Dorsolateral prefrontal cortex (tissue), 120 donors: ENCODE measurements at regions of chr5 and their contacts with region 1.

Region 1: DNA sequence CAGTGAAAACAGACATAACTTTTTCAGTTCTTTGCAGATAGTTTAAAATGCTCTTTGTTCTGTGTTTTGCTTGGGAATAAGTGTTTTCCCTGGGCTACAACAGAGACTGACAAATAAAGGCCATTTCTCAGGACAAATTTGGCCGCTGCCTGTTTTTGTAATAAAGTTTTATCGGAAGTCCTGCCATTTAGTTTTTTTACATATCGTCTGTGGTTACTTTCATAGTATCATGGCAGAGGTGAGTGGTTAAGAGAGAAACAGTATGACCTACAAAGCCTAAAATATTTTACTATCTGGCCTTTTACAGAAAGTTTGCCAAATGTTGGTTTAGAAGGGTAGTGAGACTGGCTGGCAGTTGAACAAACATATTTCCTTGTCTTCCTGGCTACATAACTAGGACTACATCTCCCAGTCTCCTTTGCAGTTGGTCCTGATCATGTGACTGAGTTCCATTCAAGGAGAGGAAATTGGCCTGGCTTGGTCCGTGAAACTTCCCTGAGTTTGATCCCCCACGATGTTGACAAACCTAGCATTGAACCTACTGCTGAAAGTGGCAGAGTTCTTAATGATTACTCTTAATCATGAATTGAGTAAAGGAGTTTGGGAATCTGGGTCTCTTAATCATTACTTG is 281.0 kb downstream of the SLIT3 start:
- DNase-seq: no peak
- H3K4me3 ChIP-seq: no peak overlapping the region
- H3K27ac ChIP-seq: no peak overlapping the region
- H3K27me3 ChIP-seq: peaks cover 0 to 3% (median 0%) of the 10 kb centered on the region in 45 donors
- CTCF ChIP-seq: no peak

Region 2: DNA sequence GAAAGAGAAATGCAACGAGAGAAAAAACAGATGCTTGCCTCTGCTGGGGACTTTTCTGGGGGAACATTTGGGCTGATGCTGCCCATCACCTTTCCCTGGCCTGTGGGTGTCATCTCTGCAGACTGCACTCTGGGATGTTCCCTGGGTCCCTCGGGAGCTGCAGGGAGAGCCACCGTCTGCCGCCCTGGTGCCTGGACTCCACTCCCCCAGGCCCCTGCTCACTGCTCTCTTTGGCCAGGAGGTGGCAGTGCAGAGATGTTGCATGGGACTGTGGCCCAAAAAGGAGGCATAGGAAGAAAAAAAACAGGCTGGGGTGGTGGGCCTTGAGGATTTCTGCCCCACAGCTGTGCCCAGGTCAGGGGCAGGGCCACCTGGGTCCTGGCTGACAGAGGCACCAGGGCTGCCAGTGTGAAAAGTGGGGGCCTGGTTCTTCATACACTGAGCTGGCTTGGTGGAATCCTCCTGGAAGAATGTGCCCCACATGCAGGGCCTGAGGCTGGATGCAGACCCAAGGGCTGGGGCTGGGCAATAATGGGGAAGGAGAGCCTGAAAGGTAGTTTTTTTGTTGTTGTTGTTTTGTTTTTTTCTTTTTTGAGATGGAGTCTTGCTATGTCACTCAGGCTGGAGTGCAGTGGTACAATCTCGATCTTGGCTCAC is 72.6 kb before region 1 on chr5:
- intact Hi-C with region 1: no loop called
- DNase-seq: peak in 2 of 10 donors; percentile 27 to 54
- H3K4me3 ChIP-seq: no peak overlapping the region
- H3K27ac ChIP-seq: no peak overlapping the region
- H3K27me3 ChIP-seq: no peaks in the 10 kb centered on the region
- CTCF ChIP-seq: peak in 54 of 56 donors; percentile 29 to 75 (median 63)

Region 3: DNA sequence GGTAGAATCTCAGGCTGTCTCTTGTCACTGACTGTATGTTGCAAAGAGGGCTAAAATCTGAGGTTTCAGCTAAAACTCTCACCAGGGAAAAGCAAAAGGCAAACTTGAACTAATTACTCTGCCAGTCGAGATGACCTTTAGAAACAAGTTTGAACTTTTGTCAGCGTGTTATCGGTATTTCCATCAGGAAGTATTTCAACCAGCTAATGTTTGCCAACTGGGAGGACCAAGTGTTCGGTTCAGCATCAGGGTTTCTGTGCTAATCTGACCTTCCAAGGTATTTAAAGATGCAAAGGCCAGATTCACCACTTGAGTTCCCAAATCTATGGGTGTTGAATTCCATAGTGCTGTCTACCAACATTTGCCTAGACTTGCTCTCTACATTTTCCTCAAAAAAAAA is 50.4 kb after region 1 on chr5:
- intact Hi-C with region 1: loop called in 1 of 2 experiments (anchors 5 kb)
- DNase-seq: no peak
- H3K4me3 ChIP-seq: no peak overlapping the region
- H3K27ac ChIP-seq: no peak overlapping the region
- H3K27me3 ChIP-seq: peaks cover 0 to 2% (median 0%) of the 10 kb centered on the region in 45 donors
- CTCF ChIP-seq: no peak

Region 4: GRCh38 chr5:169302491-169303118 is 282.6 kb after region 1 on chr5:
- intact Hi-C with region 1: no loop called
- DNase-seq: peak; percentile 62 to 88 (median 78)
- H3K4me3 ChIP-seq: peak overlapping the region in 13 of 59 donors; percentile 2 to 67 (median 17)
- H3K27ac ChIP-seq: no peak overlapping the region
- H3K27me3 ChIP-seq: peaks cover 0 to 68% (median 34%) of the 10 kb centered on the region in 45 donors
- CTCF ChIP-seq: peak; percentile 68 to 97 (median 92)